ENCODE measurements at regions of chr19 and their contacts with region 1.

Region 1: GRCh38 chr19:17766543-17767131 is 15.4 kb downstream of the FCHO1 start:
- DNase-seq: peak; percentile 90
- ATAC-seq: peak; percentile 88
- H3K4me3 ChIP-seq: no peak overlapping the region
- H3K27ac ChIP-seq: no peak overlapping the region
- H3K4me1 ChIP-seq: peaks cover 14% of the 10 kb centered on the region
- H3K27me3 ChIP-seq: no peaks in the 10 kb centered on the region
- CTCF ChIP-seq: peak; percentile 87

Region 2: GRCh38 chr19:17703824-17704463 is 62.7 kb before region 1 on chr19:
- intact Hi-C with region 1: loop called (anchors 10 kb)
- DNase-seq: peak; percentile 68
- ATAC-seq: peak; percentile 80 to 89
- H3K4me3 ChIP-seq: no peak overlapping the region
- H3K27ac ChIP-seq: no peak overlapping the region
- H3K4me1 ChIP-seq: no peaks in the 10 kb centered on the region
- H3K27me3 ChIP-seq: no peaks in the 10 kb centered on the region
- CTCF ChIP-seq: peak; percentile 92

Region 3: GRCh38 chr19:17718947-17719711 is 47.5 kb before region 1 on chr19 and contains the start of gene MAP1S:
- intact Hi-C with region 1: no loop called
- DNase-seq: peak; percentile 75
- ATAC-seq: peak; percentile 63 to 80
- H3K4me3 ChIP-seq: peak within 1 kb of the TSS; percentile 94
- H3K27ac ChIP-seq: peak within 1 kb of the TSS; percentile 82
- H3K4me1 ChIP-seq: peaks cover 57% of the 10 kb centered on the region
- H3K27me3 ChIP-seq: no peaks in the 10 kb centered on the region
- CTCF ChIP-seq: no peak
- total RNA-seq, gene MAP1S: 67.1 TPM

Region 4: GRCh38 chr19:17859533-17860330 is 93.1 kb after region 1 on chr19 and contains the start of gene RPL18A:
- intact Hi-C with region 1: no loop called
- DNase-seq: peak; percentile 99
- ATAC-seq: peak; percentile 97 to 98
- H3K4me3 ChIP-seq: peak within 1 kb of the TSS; percentile 100
- H3K27ac ChIP-seq: peak within 1 kb of the TSS; percentile 92
- H3K4me1 ChIP-seq: peaks cover 20% of the 10 kb centered on the region
- H3K27me3 ChIP-seq: no peaks in the 10 kb centered on the region
- CTCF ChIP-seq: peak; percentile 83
- total RNA-seq, gene RPL18A: 1,378 TPM

Measured in lower lobe of right lung (tissue), 2 donors.